Activated B cell treated with CpG ODN at 0.5 μM for 24 hours (primary cell): ENCODE measurements at regions of chr6 and their contacts with region 1.

Region 1: DNA sequence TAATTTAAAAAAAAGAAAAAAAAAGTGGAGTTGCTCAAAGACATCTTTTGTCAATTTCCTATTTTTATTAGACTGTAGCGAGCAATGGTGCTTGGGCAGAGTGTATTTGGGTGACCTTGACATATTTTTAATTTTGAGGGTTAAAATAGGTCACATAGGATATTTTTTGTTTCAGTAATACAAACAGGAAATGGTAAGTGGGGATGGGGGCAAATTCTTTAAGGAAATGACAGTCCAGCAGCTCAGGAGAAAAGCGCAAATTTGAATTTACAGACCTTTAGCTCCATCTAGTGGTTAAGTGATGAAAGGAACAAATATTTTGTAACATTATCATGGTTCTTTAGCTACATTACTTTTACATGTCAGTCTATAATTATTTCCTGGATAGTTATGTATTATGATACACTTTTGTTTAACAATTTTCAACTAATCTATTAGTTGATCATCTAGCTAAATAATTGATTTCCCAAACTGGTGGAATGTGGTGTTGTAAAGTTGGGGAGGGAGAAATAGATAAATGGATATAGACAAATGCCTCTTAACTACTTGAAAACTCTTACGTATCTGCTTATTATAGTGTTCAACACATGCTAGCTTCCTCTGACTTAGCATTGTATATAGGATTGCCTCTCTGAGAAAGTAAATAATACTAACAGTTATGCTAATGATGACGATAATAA is 10.0 kb downstream of the CITED2 start:
- DNase-seq: no peak
- ATAC-seq: peak; percentile 67
- H3K4me3 Mint-ChIP-seq: peak overlapping the region; percentile 9
- H3K27ac Mint-ChIP-seq: no peak overlapping the region
- H3K4me1 Mint-ChIP-seq: peaks cover 20% of the 10 kb centered on the region
- H3K27me3 Mint-ChIP-seq: no peaks in the 10 kb centered on the region
- CTCF ChIP-seq: peak; percentile 67

Region 2: GRCh38 chr6:138692058-138692977 is 672.1 kb before region 1 on chr6:
- CTCF ChIA-PET with region 1: no interaction called
- POLR2A ChIA-PET with region 1: no interaction called
- intact Hi-C with region 1: loop called (anchors 1 kb)
- DNase-seq: peak; percentile 75
- ATAC-seq: peak; percentile 79
- H3K4me3 Mint-ChIP-seq: peak overlapping the region; percentile 87
- H3K27ac Mint-ChIP-seq: no peak overlapping the region
- H3K4me1 Mint-ChIP-seq: peaks cover 11% of the 10 kb centered on the region
- H3K27me3 Mint-ChIP-seq: peaks cover 31% of the 10 kb centered on the region
- CTCF ChIP-seq: peak; percentile 63

Region 3: DNA sequence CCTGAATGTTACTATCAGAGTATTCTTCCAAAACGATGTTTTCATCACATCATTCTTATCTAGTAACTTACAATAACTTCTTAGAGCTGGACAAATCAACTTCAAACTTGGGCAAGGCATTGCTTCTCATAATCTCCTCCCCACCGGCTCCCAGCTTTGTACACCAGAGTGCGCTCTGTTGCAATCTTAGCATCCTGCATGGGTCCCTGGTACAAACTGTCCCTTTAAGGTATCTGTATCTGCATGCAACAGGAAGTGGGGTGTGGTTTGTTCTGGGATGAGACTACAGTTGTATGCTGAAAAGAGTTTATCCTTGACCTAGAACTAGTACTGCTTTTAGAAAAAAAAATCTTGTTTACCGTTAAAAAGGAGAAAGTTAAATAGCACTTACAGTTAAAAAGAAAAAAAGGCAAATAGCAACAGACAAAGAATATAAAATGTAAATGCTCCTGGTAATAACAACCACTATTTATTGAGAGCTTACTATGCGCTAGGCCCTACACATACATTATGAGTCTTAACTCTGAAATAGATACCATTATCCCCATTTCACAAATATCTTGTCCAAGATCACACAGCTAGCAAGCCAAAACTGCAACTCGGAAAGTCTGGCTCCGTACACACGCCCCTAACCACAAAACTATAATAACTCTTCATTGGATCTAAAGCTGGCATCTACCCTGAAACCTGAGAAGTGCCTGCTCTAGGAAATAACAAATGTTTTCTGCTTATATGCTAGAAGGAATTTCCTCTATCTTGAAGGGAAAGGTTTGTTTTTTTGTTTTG is 239.4 kb before region 1 on chr6:
- CTCF ChIA-PET with region 1: interaction called, 38 read pairs
- POLR2A ChIA-PET with region 1: interaction called, 4 read pairs
- intact Hi-C with region 1: loop called (anchors 1 kb)
- DNase-seq: peak; percentile 42
- ATAC-seq: peak; percentile 100
- H3K4me3 Mint-ChIP-seq: peak overlapping the region; percentile 62
- H3K27ac Mint-ChIP-seq: peak overlapping the region; percentile 88
- H3K4me1 Mint-ChIP-seq: peaks cover 38% of the 10 kb centered on the region
- H3K27me3 Mint-ChIP-seq: no peaks in the 10 kb centered on the region
- CTCF ChIP-seq: no peak

Region 4: DNA sequence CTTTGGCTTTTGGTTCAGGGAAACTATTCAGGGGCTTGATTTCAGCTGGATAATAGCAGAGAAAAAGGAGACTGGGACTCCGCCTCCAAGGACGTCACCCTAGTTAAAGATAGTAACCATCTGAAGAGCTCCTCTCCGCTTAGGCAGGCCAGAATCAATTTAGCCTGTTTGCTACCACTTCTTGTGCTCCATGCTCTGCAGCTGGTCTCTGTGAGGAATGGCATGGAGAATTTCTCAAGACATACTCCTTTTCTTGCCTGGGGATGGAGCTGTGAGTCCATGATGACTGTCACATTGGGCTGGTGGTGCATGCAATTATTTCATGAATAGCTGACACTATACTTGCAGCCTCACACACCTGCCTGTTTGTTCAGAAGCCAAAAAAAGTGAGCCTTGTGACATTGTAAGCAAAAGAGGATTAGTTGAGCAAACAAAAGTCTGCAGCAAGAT is 134.0 kb before region 1 on chr6:
- CTCF ChIA-PET with region 1: interaction called, 17 read pairs
- POLR2A ChIA-PET with region 1: no interaction called
- intact Hi-C with region 1: loop called (anchors 1 kb)
- DNase-seq: no peak
- ATAC-seq: no peak
- H3K4me3 Mint-ChIP-seq: no peak overlapping the region
- H3K27ac Mint-ChIP-seq: no peak overlapping the region
- H3K4me1 Mint-ChIP-seq: peaks cover 6% of the 10 kb centered on the region
- H3K27me3 Mint-ChIP-seq: no peaks in the 10 kb centered on the region
- CTCF ChIP-seq: no peak

Region 5: GRCh38 chr6:139291813-139292619 is 72.4 kb before region 1 on chr6 and contains the start of gene TXLNB:
- CTCF ChIA-PET with region 1: interaction called, 10 read pairs
- POLR2A ChIA-PET with region 1: interaction called, 5 read pairs
- intact Hi-C with region 1: loop called (anchors 1 kb)
- DNase-seq: no peak
- ATAC-seq: peak; percentile 59
- H3K4me3 Mint-ChIP-seq: peak within 1 kb of the TSS; percentile 76
- H3K27ac Mint-ChIP-seq: peak within 1 kb of the TSS; percentile 96
- H3K4me1 Mint-ChIP-seq: peaks cover 76% of the 10 kb centered on the region
- H3K27me3 Mint-ChIP-seq: no peaks in the 10 kb centered on the region
- CTCF ChIP-seq: no peak
- total RNA-seq, gene TXLNB: 1.9 and 2.4 TPM in 2 replicates